Heart right ventricle (tissue), 16 donors: ENCODE measurements at regions of chr22 and their contacts with region 1.

Region 1: GRCh38 chr22:29117799-29118477 is 45.1 kb downstream of the KREMEN1 start:
- DNase-seq: no peak
- ATAC-seq: peak in 1 of 8 donors; percentile 45
- H3K4me3 ChIP-seq: no peak overlapping the region
- H3K27ac ChIP-seq: peak overlapping the region in 1 of 10 donors; percentile 75
- H3K4me1 ChIP-seq: peaks cover 0 to 11% (median 7%) of the 10 kb centered on the region in 9 donors
- H3K27me3 ChIP-seq: no peaks in the 10 kb centered on the region
- CTCF ChIP-seq: no peak

Region 2: DNA sequence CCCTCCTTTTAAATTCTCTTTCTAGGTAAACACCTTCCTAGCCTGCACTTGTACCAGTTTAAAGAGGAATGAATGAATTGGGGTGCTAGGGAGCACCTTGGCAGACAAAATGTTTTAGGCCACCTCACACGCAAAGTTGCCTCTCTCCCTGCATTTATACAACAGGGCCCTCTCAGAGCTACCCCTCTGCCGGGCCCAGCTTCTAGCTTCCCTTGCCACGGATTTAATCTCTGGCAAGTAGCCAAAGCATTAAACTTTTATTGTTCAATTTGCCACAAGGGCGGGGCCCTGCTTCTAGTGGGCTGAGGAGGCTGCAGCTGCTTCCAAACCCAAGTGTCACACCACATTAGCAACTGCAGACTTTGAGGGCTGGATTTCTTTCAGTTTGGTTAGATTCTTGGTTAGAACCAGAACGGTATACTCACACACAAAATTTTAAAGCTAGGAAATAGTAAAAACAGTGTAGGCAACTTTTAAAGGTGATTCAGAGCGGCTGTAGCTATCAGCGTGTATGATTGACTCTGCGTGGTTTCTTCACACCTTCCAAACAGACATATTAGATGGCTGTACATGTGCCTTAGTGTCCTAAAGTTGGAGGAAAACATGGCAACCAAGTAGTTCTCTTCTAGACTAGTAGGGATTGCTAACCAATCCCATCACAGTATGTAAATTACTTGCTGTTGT is 38.6 kb before region 1 on chr22:
- intact Hi-C with region 1: no loop called
- DNase-seq: no peak
- ATAC-seq: peak in 2 of 8 donors; percentile 5 to 18
- H3K4me3 ChIP-seq: no peak overlapping the region
- H3K27ac ChIP-seq: peak overlapping the region in 6 of 10 donors; percentile 0 to 64 (median 40)
- H3K4me1 ChIP-seq: peaks cover 0 to 62% (median 44%) of the 10 kb centered on the region in 9 donors
- H3K27me3 ChIP-seq: peaks cover 0 to 20% (median 0%) of the 10 kb centered on the region in 7 donors
- CTCF ChIP-seq: no peak

Region 3: DNA sequence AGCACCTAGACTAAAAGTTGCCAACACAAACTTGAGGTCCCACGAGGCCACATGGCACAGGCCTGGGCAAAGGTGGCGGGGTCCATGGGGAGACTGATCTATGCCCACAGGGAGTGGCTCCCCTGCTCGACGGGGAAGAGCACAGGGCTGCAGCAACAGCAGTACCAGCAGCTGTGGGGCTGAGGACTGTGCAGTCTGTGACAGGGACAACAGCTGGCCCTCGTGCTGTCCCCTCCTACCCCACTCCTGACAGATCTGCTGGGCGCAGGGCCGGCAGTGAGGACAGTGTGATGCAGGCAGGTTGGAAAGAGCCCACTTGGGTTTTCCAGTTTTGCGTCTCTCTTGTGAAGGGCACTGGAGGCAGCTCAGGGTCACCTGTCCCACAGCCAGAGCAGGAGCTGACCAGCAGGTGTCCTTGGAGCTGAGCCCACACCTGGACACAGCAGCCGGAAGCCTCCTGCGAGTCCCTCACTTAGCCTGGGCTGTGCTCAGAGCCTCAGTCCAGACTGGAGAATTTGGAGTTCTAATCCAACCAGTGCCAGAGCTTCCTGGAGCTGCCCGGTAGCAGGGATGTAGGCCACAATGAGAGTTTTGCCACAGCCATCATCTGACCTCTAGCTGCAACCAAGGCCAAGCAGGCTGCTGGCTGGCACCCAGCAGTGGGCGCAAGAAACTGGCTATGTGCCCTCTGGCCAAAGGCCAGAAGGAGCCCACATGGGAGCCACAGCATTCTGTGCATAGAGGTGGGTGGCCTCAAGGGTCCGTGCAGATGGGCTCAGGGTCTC is 184.9 kb after region 1 on chr22:
- intact Hi-C with region 1: no loop called
- DNase-seq: no peak
- ATAC-seq: no peak
- H3K4me3 ChIP-seq: no peak overlapping the region
- H3K27ac ChIP-seq: peak overlapping the region in 7 of 10 donors; percentile 9 to 34 (median 22)
- H3K4me1 ChIP-seq: peaks cover 5 to 34% (median 20%) of the 10 kb centered on the region in 9 donors
- H3K27me3 ChIP-seq: no peaks in the 10 kb centered on the region
- CTCF ChIP-seq: no peak

Region 4: GRCh38 chr22:30121960-30122359 is 1004.0 kb after region 1 on chr22:
- intact Hi-C with region 1: loop called in 1 of 10 experiments (anchors 5 kb)
- DNase-seq: no peak
- ATAC-seq: no peak
- H3K4me3 ChIP-seq: no peak overlapping the region
- H3K27ac ChIP-seq: no peak overlapping the region
- H3K4me1 ChIP-seq: peaks cover 0 to under 1% (median 0%) of the 10 kb centered on the region in 9 donors
- H3K27me3 ChIP-seq: peaks cover 0 to 59% (median 49%) of the 10 kb centered on the region in 7 donors
- CTCF ChIP-seq: no peak